SK-N-SH (cell line): ENCODE measurements at regions of chr16 and their contacts with region 1.

Region 1: GRCh38 chr16:67816240-67817031 is 9.7 kb downstream of the TSNAXIP1 start:
- DNase-seq: peak; percentile 94
- H3K4me3 ChIP-seq: no peak overlapping the region; a peak in 1 of 4 replicates
- H3K27ac ChIP-seq: no peak overlapping the region
- H3K4me1 ChIP-seq: no peaks in the 10 kb centered on the region; a peak in 1 of 4 replicates
- H3K27me3 ChIP-seq: no peaks in the 10 kb centered on the region
- CTCF ChIP-seq: peak; percentile 99
- EP300 ChIP-seq: no peak
- RAD21 ChIP-seq: peak; percentile 75

Region 2: GRCh38 chr16:67672739-67673662 is 143.4 kb before region 1 on chr16:
- CTCF ChIA-PET with region 1: interaction called, 40 read pairs
- POLR2A ChIA-PET with region 1: no interaction called
- DNase-seq: peak; percentile 84
- H3K4me3 ChIP-seq: no peak overlapping the region; a peak in 1 of 4 replicates
- H3K27ac ChIP-seq: peak overlapping the region; percentile 32 to 69; a peak in 3 of 4 replicates
- H3K4me1 ChIP-seq: peaks cover 15 to 31% of the 10 kb centered on the region in 2 experiments; a peak in 2 of 4 replicates
- H3K27me3 ChIP-seq: no peaks in the 10 kb centered on the region
- CTCF ChIP-seq: peak; percentile 76
- EP300 ChIP-seq: no peak
- RAD21 ChIP-seq: peak; percentile 82

Region 3: DNA sequence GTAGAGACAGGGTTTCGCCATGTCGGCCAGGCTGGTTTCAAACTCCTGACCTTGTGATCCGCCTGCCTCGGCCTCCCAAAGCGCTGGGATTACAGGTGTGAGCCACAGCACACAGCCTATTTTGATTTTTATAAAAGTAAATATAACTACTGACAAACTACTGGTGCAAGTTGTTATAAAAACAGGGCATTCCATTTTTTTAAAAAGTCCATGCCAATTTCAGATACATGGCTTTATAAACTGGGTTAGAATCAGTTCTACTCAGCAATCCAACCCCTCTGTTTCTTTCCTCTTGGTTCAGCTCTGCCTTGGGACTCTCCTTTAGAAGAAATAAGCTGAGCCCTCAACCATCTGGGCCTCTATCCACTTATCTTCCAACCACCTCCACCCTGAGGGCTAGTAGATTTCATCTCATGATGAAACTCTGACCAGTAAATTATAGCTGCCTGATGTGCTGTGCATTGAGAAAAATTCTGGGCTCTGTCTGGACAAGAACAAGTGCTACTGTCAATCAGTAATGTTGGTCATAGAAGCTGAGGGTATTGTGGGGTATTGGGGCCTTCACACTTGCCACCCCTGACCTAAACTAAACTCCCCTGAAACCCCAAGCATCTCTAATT is 20.2 kb before region 1 on chr16:
- CTCF ChIA-PET with region 1: interaction called, 42 read pairs
- POLR2A ChIA-PET with region 1: no interaction called
- DNase-seq: no peak
- H3K4me3 ChIP-seq: no peak overlapping the region
- H3K27ac ChIP-seq: no peak overlapping the region
- H3K4me1 ChIP-seq: peaks cover 3 to 6% of the 10 kb centered on the region in 2 experiments; a peak in 1 of 4 replicates
- H3K27me3 ChIP-seq: no peaks in the 10 kb centered on the region
- CTCF ChIP-seq: no peak
- EP300 ChIP-seq: no peak
- RAD21 ChIP-seq: no peak

Region 4: DNA sequence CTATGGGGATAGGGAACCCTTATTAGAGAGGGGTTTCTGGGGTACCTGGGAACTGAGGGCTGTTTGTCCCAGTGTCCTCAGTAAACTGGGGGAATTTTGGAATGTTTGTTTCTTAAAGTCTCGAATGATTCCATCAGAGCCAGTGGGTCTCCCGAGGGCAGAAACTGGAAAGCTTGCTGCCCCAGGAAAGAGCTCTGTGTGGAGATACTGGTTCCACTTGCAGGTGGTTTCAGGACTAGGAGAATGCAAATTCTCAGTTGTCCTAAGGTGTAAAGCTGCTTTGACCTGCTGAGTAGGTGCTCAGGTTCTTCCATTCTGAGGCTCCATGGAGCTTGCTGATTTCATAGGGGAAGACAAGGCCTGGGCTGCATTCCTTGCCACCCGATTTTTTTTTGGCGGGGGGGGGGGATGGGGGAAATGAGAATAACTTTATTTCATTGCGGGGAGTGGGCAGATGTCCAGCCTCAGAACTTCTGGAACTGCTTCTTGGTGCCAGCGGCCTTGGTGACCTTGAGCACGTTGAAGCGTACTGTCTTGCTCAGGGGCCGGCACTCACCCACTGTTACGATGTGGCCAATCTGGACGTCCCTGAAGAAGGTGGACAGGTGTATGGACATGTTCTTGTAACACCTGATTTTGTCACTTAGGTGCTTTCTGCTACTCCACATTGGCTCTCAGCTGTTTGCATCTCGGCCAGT is 39.2 kb after region 1 on chr16:
- CTCF ChIA-PET with region 1: interaction called, 18 read pairs
- POLR2A ChIA-PET with region 1: interaction called, 4 read pairs
- DNase-seq: no peak
- H3K4me3 ChIP-seq: no peak overlapping the region
- H3K27ac ChIP-seq: no peak overlapping the region
- H3K4me1 ChIP-seq: peaks cover 2 to 8% of the 10 kb centered on the region in 2 experiments; a peak in 2 of 4 replicates
- H3K27me3 ChIP-seq: no peaks in the 10 kb centered on the region
- CTCF ChIP-seq: no peak
- EP300 ChIP-seq: no peak
- RAD21 ChIP-seq: no peak

Region 5: DNA sequence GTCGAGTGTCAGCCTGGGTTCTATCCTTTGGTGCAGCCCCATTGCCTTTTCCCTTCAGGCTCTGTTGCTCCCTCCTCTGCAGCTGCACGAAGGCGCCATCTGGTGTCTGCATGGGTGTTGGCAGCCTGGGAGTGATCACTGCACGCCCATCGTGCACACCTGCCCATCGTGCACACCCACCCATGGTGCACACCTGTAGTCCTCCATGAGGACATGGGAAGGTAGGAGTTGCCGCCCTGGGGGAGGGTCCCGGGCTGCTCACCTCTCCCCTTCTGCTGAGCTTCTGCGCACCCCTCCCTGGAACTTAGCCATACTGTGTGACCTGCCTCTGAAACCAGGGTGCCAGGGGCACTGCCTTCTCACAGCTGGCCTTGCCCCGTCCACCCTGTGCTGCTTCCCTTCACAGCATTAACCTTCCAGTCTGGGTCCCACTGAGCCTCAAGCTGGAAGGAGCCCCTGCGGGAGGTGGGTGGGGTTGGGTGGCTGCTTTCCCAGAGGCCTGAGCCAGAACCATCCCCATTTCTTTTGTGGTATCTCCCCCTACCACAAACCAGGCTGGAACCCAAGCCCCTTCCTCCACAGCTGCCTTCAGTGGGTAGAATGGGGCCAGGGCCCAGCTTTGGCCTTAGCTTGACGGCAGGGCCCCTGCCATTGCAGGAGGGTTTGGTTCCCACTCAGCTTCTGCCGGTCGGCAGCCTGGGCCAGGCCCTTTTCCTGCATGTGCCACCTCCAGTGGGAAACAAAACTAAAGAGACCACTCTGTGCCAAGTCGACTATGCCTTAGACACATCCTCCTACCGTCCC is 112.3 kb after region 1 on chr16:
- CTCF ChIA-PET with region 1: interaction called, 29 read pairs
- POLR2A ChIA-PET with region 1: no interaction called
- DNase-seq: peak; percentile 90
- H3K4me3 ChIP-seq: no peak overlapping the region; a peak in 1 of 4 replicates
- H3K27ac ChIP-seq: no peak overlapping the region
- H3K4me1 ChIP-seq: peaks cover 0 to 2% of the 10 kb centered on the region in 2 experiments; a peak in 1 of 4 replicates
- H3K27me3 ChIP-seq: no peaks in the 10 kb centered on the region
- CTCF ChIP-seq: peak; percentile 86
- EP300 ChIP-seq: no peak
- RAD21 ChIP-seq: peak; percentile 91

Region 6: GRCh38 chr16:68059804-68060203 is 243.4 kb after region 1 on chr16:
- CTCF ChIA-PET with region 1: interaction called, 10 read pairs
- POLR2A ChIA-PET with region 1: no interaction called
- DNase-seq: no peak
- H3K4me3 ChIP-seq: no peak overlapping the region
- H3K27ac ChIP-seq: no peak overlapping the region
- H3K4me1 ChIP-seq: peaks cover 0 to 8% of the 10 kb centered on the region in 2 experiments; a peak in 2 of 4 replicates
- H3K27me3 ChIP-seq: no peaks in the 10 kb centered on the region
- CTCF ChIP-seq: no peak
- EP300 ChIP-seq: no peak
- RAD21 ChIP-seq: no peak

Region 7: GRCh38 chr16:68247400-68247799 is 431.0 kb after region 1 on chr16:
- CTCF ChIA-PET with region 1: no interaction called
- POLR2A ChIA-PET with region 1: no interaction called
- DNase-seq: no peak
- H3K4me3 ChIP-seq: no peak overlapping the region
- H3K27ac ChIP-seq: no peak overlapping the region
- H3K4me1 ChIP-seq: peaks cover 7 to 15% of the 10 kb centered on the region in 2 experiments; a peak in 2 of 4 replicates
- H3K27me3 ChIP-seq: no peaks in the 10 kb centered on the region
- CTCF ChIP-seq: no peak
- EP300 ChIP-seq: no peak
- RAD21 ChIP-seq: no peak